Activated CD4-positive, alpha-beta memory T cell treated with anti-CD3 and anti-CD28 coated beads for 36 hours (primary cell): ENCODE measurements at regions of chr2 and their contacts with region 1.

Region 1: DNA sequence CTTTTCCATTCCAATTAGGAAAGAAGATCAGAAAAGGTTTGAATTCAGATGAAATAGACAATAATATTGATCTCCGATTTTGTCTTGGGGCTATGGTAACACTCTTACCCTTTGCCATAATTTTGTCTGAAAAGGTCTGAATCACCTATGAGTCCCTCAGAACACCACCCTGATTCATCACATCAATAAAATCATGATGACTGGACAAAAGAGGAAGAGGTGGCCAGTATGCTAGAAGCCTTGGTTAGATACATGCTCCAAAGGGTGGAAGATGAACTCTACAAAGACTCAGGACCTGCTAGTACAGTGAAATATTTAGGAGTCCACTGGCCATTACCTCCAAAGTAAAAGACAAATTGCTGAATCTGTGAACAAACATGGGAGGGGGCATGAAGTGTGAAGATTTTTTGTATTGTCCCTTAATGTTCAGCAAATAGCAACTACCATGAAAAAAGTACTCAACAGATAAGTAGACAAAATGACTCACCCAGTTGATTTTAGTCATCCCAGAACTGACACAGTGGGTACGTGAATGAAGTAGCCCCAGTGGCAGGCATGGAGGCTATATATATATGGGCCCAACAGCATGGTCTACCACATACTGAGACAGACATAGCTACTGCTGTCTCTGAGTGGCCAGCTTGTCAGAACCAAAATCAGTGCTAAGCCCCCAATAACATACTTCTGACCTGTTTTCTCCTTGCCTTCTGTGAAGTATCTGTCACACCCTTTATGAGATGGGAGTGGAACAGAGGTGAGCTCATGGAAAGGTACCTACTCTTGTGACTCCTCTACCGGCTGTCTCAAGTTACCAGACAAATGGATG is 36.5 kb upstream of the GLS start:
- DNase-seq: peak; percentile 78
- H3K4me3 Mint-ChIP-seq: peak overlapping the region; percentile 30
- H3K27ac Mint-ChIP-seq: peak overlapping the region; percentile 92
- H3K4me1 Mint-ChIP-seq: peaks cover 39% of the 10 kb centered on the region
- H3K27me3 Mint-ChIP-seq: peaks cover 1% of the 10 kb centered on the region

Region 2: GRCh38 chr2:189798312-189799029 is 1045.6 kb before region 1 on chr2:
- CTCF ChIA-PET with region 1: no interaction called
- POLR2A ChIA-PET with region 1: no interaction called
- intact Hi-C with region 1: no loop called
- DNase-seq: no peak
- H3K4me3 Mint-ChIP-seq: no peak overlapping the region
- H3K27ac Mint-ChIP-seq: no peak overlapping the region
- H3K4me1 Mint-ChIP-seq: peaks cover 3% of the 10 kb centered on the region
- H3K27me3 Mint-ChIP-seq: no peaks in the 10 kb centered on the region

Region 3: GRCh38 chr2:190648289-190649034 is 195.6 kb before region 1 on chr2:
- CTCF ChIA-PET with region 1: no interaction called
- POLR2A ChIA-PET with region 1: no interaction called
- intact Hi-C with region 1: loop called (anchors 1 kb)
- DNase-seq: peak; percentile 85
- H3K4me3 Mint-ChIP-seq: peak overlapping the region; percentile 75
- H3K27ac Mint-ChIP-seq: peak overlapping the region; percentile 82
- H3K4me1 Mint-ChIP-seq: peaks cover 38% of the 10 kb centered on the region
- H3K27me3 Mint-ChIP-seq: no peaks in the 10 kb centered on the region

Region 4: GRCh38 chr2:190746971-190747761 is 96.9 kb before region 1 on chr2:
- CTCF ChIA-PET with region 1: no interaction called
- POLR2A ChIA-PET with region 1: no interaction called
- intact Hi-C with region 1: no loop called
- DNase-seq: no peak
- H3K4me3 Mint-ChIP-seq: no peak overlapping the region
- H3K27ac Mint-ChIP-seq: no peak overlapping the region
- H3K4me1 Mint-ChIP-seq: peaks cover 22% of the 10 kb centered on the region
- H3K27me3 Mint-ChIP-seq: no peaks in the 10 kb centered on the region

Region 5: DNA sequence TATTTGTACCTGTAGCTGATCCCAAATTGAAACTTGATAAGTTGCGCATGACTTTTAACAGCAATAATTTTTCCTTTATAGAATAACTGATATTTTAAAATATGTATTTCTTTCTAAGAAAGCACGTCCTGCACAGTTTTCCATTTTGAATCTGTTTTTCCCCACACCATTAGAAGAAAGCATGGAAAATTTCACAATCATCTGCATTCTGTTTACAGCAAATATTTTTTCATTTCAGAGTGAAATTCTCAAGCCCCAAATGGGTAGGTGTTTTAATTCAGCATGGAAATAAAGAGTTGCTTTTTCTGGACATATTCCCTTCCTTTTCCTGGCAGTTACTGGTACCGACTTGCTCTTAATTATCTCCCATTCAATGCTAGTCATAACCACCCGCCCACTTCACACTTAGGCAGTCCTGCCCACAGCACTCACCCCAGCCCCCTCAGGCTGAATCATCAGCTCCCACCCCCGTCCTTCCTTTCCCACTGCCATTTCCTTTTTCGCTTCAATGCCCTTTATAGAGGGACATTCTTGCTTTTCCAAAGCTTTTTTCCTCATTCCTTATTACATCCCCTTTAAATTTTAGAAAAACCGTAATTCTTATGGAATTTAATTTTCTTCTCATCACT is 52.6 kb before region 1 on chr2:
- CTCF ChIA-PET with region 1: interaction called, 5 read pairs
- POLR2A ChIA-PET with region 1: no interaction called
- intact Hi-C with region 1: loop called (anchors 2 kb)
- DNase-seq: peak; percentile 73
- H3K4me3 Mint-ChIP-seq: no peak overlapping the region
- H3K27ac Mint-ChIP-seq: peak overlapping the region; percentile 61
- H3K4me1 Mint-ChIP-seq: peaks cover 55% of the 10 kb centered on the region
- H3K27me3 Mint-ChIP-seq: no peaks in the 10 kb centered on the region

Region 6: DNA sequence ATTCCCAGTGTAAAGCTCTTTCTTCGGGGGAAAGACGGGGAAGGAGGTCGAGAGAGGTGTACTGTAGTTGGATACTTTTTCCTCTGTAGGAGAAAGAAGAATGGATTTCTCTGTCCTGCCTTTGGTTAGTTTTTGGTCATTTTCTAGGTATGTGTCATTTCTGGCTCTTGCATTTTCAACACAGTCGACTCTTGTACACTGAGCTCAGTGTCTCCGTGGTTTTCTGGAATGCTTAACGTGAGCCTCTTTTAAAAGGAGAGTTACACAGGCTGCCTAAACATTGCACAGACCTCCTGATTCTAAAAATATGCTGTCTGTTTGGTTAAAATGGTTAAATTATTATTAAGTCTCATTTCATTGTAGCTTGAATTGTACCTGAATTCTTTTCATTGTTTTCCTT is 14.7 kb after region 1 on chr2:
- CTCF ChIA-PET with region 1: no interaction called
- POLR2A ChIA-PET with region 1: no interaction called
- intact Hi-C with region 1: loop called (anchors 1 kb)
- DNase-seq: no peak
- H3K4me3 Mint-ChIP-seq: no peak overlapping the region
- H3K27ac Mint-ChIP-seq: no peak overlapping the region
- H3K4me1 Mint-ChIP-seq: peaks cover 27% of the 10 kb centered on the region
- H3K27me3 Mint-ChIP-seq: no peaks in the 10 kb centered on the region

Region 7: GRCh38 chr2:191013932-191014652 is 170.0 kb after region 1 on chr2 and contains the start of gene STAT1:
- CTCF ChIA-PET with region 1: no interaction called
- POLR2A ChIA-PET with region 1: no interaction called
- intact Hi-C with region 1: loop called (anchors 2 kb)
- DNase-seq: peak; percentile 97
- H3K4me3 Mint-ChIP-seq: no peak within 1 kb of the TSS
- H3K27ac Mint-ChIP-seq: no peak within 1 kb of the TSS
- H3K4me1 Mint-ChIP-seq: peaks cover 39% of the 10 kb centered on the region
- H3K27me3 Mint-ChIP-seq: no peaks in the 10 kb centered on the region
- total RNA-seq, gene STAT1: 309 to 314 TPM